Heart right ventricle (tissue), 16 donors: ENCODE measurements at regions of chr10 and their contacts with region 1.

Region 1: GRCh38 chr10:75401569-75402485 is at the start of gene ZNF503:
- DNase-seq: peak; percentile 95 to 97
- ATAC-seq: peak; percentile 78 to 93 (median 90)
- H3K4me3 ChIP-seq: peak within 1 kb of the TSS; percentile 85 to 98 (median 90)
- H3K27ac ChIP-seq: peak within 1 kb of the TSS; percentile 85 to 99 (median 94)
- H3K4me1 ChIP-seq: peaks cover 5 to 62% (median 44%) of the 10 kb centered on the region in 9 donors
- H3K27me3 ChIP-seq: peaks cover 0 to 64% (median 34%) of the 10 kb centered on the region in 7 donors
- CTCF ChIP-seq: peak in 5 of 9 donors; percentile 9 to 42 (median 29)
- total RNA-seq, gene ZNF503: 2.5 to 9.7 (median 4.1) TPM

Region 2: DNA sequence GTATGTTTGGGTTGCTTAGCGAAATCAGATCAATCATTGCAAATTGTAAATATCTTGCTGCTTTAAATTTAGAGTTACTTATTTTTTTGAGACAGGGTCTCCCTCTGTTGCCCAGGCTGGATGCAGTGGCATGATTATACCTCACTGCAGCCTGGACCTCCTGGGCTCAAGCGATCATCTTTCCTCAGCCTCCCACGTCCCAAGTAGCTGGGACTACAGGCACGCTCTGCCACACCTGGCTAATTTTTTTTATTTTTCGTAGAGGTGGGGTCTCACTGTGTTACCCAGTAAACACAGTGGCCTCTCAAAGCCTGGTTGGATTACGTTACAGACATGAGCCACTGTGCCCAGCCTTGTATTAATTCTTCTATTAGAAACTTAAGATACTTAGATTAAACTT is 189.5 kb before region 1 on chr10:
- intact Hi-C with region 1: no loop called
- DNase-seq: no peak
- ATAC-seq: no peak
- H3K4me3 ChIP-seq: peak overlapping the region in 8 of 10 donors; percentile 72 to 95 (median 90)
- H3K27ac ChIP-seq: peak overlapping the region in 5 of 10 donors; percentile 94 to 100 (median 99)
- H3K4me1 ChIP-seq: peaks cover 5 to 69% (median 66%) of the 10 kb centered on the region in 9 donors
- H3K27me3 ChIP-seq: no peaks in the 10 kb centered on the region
- CTCF ChIP-seq: no peak

Region 3: DNA sequence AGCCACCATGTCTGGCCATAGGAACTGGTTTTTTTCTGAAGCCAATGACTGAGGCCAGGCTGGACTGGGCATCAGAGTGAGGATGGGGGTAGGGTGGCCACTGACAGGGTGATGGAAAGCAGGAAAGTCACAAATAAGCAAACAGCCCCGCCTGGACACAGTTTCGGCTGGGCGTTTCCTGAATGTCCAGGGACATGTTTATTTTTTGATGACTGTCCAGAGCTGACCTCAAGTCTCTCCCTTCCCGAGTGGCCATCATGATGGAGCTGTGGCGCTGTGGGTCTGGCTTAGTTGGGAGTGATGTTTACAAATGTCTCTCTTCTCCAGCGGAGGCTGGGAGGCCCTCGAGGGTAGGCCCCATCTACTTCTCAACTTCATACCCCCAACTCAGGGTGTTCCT is 128.9 kb before region 1 on chr10:
- intact Hi-C with region 1: no loop called
- DNase-seq: no peak
- ATAC-seq: peak in 5 of 8 donors; percentile 17 to 49 (median 33)
- H3K4me3 ChIP-seq: no peak overlapping the region
- H3K27ac ChIP-seq: no peak overlapping the region
- H3K4me1 ChIP-seq: peaks cover 0 to 8% (median 0%) of the 10 kb centered on the region in 9 donors
- H3K27me3 ChIP-seq: peaks cover 0 to 8% (median 0%) of the 10 kb centered on the region in 7 donors
- CTCF ChIP-seq: no peak

Region 4: DNA sequence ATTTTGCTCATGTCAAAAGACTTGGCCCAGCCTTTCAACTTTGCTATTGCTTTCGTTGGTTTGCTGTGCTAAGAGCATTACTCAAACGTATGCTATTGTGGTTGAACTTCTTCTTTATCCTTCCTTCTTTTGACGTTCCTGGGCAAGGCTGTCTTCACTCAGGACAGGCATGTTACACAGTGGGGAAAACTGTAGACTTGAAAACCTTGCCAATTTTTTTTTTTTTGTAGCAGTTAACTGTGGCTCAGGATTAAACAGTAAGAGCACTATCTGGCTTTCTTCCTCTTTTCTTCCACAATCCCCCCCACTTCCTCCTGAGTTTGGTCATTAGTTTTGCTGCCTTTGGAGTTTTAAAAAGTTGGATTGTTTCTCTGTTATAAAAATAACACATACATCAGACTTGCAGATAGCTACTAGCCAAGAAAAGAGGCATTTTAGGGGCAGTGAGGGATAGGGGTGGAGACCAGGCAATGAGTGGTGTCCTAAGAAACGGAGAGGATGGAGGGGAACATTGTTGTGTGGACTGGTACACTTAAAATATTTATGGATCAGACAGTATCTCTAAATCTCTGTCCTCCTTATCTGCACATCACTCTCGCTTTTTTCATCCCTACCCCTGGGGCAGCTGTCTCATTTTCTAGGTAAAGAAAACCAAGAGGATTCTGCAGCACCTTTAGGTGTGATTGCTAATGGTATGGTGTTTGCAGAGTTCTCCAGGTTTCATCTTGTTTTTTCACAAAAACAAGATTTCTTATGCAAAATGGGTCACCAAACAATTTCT is 211.3 kb after region 1 on chr10:
- intact Hi-C with region 1: loop called in 1 of 10 experiments (anchors 10 kb)
- DNase-seq: peak in 1 of 2 donors; percentile 9
- ATAC-seq: peak; percentile 38 to 87 (median 80)
- H3K4me3 ChIP-seq: no peak overlapping the region
- H3K27ac ChIP-seq: peak overlapping the region in 2 of 10 donors; percentile 17 to 88
- H3K4me1 ChIP-seq: peaks cover 3 to 59% (median 14%) of the 10 kb centered on the region in 9 donors
- H3K27me3 ChIP-seq: no peaks in the 10 kb centered on the region
- CTCF ChIP-seq: no peak

Region 5: DNA sequence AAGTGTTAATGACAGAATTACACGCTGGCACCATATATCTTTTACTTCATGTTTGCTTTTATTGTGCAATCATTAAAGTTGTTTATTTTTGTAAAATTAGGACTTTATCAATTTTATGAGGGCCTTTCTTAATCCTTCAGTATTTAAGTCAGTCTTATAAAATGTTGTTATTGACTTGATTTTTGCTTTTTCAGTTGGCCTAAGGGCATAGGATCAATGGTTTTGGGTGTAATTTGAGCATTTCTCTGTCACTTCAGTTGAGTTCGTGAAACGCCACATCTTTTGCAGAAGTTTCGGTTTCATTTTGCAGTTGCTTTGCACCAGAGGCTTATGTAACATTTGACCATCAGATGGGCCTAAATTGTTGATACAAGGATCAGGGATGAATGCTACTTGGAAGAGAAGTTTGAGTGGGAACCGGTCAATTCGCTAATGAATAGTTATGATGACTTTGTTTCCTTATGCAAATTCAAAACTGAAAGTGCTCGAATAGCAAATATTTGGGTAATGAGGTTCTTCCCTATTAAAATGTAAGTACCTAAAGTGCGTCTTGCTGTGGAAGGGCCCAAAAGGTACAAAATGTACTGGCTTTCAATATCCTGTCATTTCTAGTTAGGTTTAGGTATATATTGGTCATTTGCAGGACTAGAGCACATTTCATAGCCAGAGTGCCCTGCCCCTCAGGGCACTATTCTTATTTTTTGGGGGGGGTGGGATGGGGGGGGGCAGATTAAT is 370.5 kb after region 1 on chr10:
- intact Hi-C with region 1: loop called in 2 of 10 experiments (anchors 2 to 10 kb)
- DNase-seq: no peak
- ATAC-seq: no peak
- H3K4me3 ChIP-seq: peak overlapping the region in 9 of 10 donors; percentile 2 to 47 (median 41)
- H3K27ac ChIP-seq: peak overlapping the region in 9 of 10 donors; percentile 26 to 80 (median 63)
- H3K4me1 ChIP-seq: peaks cover 0 to 46% (median 15%) of the 10 kb centered on the region in 9 donors
- H3K27me3 ChIP-seq: no peaks in the 10 kb centered on the region
- CTCF ChIP-seq: no peak

Region 6: GRCh38 chr10:76036111-76036940 is 634.5 kb after region 1 on chr10:
- intact Hi-C with region 1: loop called in 9 of 10 experiments (anchors 2 to 5 kb)
- DNase-seq: peak; percentile 73 to 81
- ATAC-seq: peak; percentile 78 to 95 (median 88)
- H3K4me3 ChIP-seq: peak overlapping the region in 6 of 10 donors; percentile 19 to 38 (median 25)
- H3K27ac ChIP-seq: no peak overlapping the region
- H3K4me1 ChIP-seq: peaks cover 0 to 25% (median 9%) of the 10 kb centered on the region in 9 donors
- H3K27me3 ChIP-seq: no peaks in the 10 kb centered on the region
- CTCF ChIP-seq: peak; percentile 88 to 98 (median 95)

Region 7: GRCh38 chr10:76547352-76547972 is 1145.6 kb after region 1 on chr10:
- intact Hi-C with region 1: loop called in 9 of 10 experiments (anchors 5 to 10 kb)
- DNase-seq: peak; percentile 56 to 89
- ATAC-seq: peak; percentile 56 to 78 (median 72)
- H3K4me3 ChIP-seq: peak overlapping the region in 1 of 10 donors; percentile 12
- H3K27ac ChIP-seq: no peak overlapping the region
- H3K4me1 ChIP-seq: peaks cover 0 to 15% (median 0%) of the 10 kb centered on the region in 9 donors
- H3K27me3 ChIP-seq: no peaks in the 10 kb centered on the region
- CTCF ChIP-seq: peak; percentile 72 to 91 (median 83)